Kidney (tissue), 22 donors: ENCODE measurements at regions of chr13 and their contacts with region 1.

Region 1: GRCh38 chr13:23105051-23105450 is 75.7 kb upstream of the SGCG start:
- DNase-seq: peak in 2 of 5 donors; percentile 9 to 12
- H3K4me3 ChIP-seq: no peak overlapping the region
- H3K27ac ChIP-seq: no peak overlapping the region
- H3K4me1 ChIP-seq: no peaks in the 10 kb centered on the region
- H3K27me3 ChIP-seq: no peaks in the 10 kb centered on the region
- CTCF ChIP-seq: no peak

Region 2: GRCh38 chr13:23159760-23160637 is 54.9 kb after region 1 on chr13:
- intact Hi-C with region 1: loop called (anchors 10 kb)
- DNase-seq: peak in 4 of 5 donors; percentile 75 to 83 (median 80)
- H3K4me3 ChIP-seq: peak overlapping the region in 1 of 3 donors; percentile 17
- H3K27ac ChIP-seq: no peak overlapping the region
- H3K4me1 ChIP-seq: no peaks in the 10 kb centered on the region
- H3K27me3 ChIP-seq: no peaks in the 10 kb centered on the region
- CTCF ChIP-seq: no peak